PC-3 (cell line): ENCODE measurements at regions of chr1 and their contacts with region 1.

Region 1: DNA sequence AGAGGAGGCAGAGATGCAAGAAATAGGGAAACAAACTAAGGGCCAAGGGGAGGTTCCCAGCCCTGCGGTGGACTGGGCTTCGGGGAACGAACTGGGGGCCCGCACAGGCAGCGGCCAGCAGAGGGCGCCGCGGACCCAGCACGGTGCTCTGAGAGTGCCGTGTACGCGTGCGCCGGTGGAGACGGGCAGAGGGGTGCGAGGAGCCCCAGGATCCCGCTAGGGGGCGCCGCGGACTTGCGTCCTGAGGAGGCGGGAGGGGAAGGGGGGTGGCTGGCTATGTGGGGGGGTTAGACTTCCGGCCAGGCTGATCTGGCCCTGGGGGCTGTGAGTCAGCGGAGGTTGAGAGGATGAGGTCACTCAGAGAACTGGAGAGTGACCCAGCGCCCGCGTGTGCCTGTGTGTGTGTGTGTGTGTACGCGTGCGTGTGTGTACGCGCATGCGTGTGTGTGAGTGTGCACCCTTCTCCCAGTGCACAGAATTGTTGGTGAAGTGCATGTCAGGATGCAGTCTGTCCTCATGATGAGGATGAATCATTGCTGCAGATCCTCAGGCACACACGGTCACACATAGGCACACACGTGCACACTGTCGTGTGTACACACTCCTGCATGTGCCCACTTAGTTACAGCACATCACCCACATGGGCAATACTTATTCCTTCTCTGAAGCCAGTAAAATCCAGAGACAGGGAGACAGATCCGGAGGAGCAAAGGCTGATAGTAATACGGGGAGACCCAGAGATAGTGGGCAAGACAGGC is 17.0 kb downstream of the NES start:
- DNase-seq: peak; percentile 99
- ATAC-seq: peak; percentile 70
- H3K4me3 ChIP-seq: peak overlapping the region; percentile 64
- H3K27ac ChIP-seq: peak overlapping the region; percentile 66
- H3K4me1 ChIP-seq: peaks cover 52% of the 10 kb centered on the region
- H3K27me3 ChIP-seq: 0 out of 2 replicates have a peak, but pooled peaks cover 3% of the 10 kb centered on the region
- CTCF ChIP-seq: peak; percentile 100

Region 2: DNA sequence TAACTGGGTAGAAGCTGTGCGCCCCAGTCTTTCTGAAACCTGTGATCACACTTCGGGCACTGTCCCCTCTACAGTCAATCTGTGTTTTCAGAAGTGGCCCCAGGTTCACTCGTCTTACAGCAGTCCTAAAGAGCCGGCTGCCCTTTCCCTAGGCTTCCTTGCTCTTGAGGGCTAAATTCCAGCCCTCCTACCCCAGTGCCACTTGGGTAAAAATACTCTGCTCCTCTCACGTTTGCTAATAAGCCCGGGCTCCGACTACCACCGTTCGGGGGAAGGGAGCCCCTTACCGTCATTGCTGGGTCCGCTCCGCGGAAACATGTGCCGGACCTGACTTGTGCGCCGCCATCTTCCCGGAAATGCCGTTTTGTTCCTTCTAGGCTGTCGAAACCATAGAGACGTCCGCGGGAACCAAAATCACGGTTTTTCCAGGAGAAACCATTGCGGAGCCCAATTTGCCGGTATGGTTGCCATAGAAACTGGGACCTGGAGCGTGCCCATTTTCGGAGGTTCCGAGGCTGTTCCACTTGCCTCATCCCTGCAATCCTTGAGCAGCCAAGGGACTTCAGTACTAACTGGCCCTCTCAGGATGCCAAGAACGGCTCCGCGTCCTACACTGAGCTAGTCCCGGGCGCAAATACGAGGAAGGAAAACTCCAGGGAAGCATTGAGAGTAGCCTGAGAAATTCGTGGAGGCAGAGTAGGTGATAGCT is 58.9 kb before region 1 on chr1 and contains the start of gene GPATCH4:
- CTCF ChIA-PET with region 1: no interaction called
- POLR2A ChIA-PET with region 1: interaction called, 19 read pairs
- intact Hi-C with region 1: no loop called
- DNase-seq: peak; percentile 90
- ATAC-seq: peak; percentile 83
- H3K4me3 ChIP-seq: peak within 1 kb of the TSS; percentile 94
- H3K27ac ChIP-seq: peak within 1 kb of the TSS; percentile 53
- H3K4me1 ChIP-seq: peaks cover 20% of the 10 kb centered on the region
- H3K27me3 ChIP-seq: no peaks in the 10 kb centered on the region
- CTCF ChIP-seq: no peak
- total RNA-seq, gene GPATCH4: 37.3 and 73.7 TPM in 2 replicates

Region 3: DNA sequence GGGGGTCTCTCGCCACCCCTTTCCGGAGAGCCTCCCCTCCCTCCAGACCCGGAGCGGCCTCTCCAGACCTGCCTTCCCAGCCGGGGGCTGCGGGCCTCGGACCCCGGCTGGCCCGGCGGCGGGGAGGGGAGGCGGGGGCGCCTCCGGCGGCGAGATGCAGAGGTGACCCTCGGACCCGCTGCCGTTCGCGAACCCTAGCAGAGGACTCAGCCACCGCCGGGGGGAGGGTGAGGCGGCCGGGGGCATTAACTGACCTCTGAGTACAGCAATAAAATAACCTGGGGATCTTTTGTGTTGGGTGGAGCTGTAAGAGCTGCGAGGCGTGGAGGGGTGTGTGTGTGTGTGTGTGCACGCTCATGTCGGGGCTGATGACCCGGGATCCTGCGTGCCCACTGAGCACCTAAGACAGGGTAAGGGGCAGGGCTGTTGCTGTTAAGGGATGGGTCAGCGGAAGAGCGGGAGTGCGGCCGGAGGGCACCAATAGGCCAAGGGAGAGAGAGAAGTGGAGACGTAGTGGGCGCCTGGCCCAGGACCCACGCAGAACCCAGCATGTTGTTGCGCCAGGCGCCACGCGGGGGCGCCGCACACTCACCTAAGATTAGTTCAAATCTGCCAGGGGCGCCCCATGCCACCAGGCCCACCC is 34.6 kb before region 1 on chr1:
- CTCF ChIA-PET with region 1: interaction called, 6 read pairs
- POLR2A ChIA-PET with region 1: no interaction called
- intact Hi-C with region 1: loop called (anchors 1 kb)
- DNase-seq: peak; percentile 68
- ATAC-seq: peak; percentile 60
- H3K4me3 ChIP-seq: peak overlapping the region; percentile 36; the same call in 1 of the 2 replicates
- H3K27ac ChIP-seq: no peak overlapping the region
- H3K4me1 ChIP-seq: 0 out of 2 replicates have a peak, but pooled peaks cover 6% of the 10 kb centered on the region
- H3K27me3 ChIP-seq: peaks cover 26% of the 10 kb centered on the region
- CTCF ChIP-seq: peak; percentile 94

Region 4: DNA sequence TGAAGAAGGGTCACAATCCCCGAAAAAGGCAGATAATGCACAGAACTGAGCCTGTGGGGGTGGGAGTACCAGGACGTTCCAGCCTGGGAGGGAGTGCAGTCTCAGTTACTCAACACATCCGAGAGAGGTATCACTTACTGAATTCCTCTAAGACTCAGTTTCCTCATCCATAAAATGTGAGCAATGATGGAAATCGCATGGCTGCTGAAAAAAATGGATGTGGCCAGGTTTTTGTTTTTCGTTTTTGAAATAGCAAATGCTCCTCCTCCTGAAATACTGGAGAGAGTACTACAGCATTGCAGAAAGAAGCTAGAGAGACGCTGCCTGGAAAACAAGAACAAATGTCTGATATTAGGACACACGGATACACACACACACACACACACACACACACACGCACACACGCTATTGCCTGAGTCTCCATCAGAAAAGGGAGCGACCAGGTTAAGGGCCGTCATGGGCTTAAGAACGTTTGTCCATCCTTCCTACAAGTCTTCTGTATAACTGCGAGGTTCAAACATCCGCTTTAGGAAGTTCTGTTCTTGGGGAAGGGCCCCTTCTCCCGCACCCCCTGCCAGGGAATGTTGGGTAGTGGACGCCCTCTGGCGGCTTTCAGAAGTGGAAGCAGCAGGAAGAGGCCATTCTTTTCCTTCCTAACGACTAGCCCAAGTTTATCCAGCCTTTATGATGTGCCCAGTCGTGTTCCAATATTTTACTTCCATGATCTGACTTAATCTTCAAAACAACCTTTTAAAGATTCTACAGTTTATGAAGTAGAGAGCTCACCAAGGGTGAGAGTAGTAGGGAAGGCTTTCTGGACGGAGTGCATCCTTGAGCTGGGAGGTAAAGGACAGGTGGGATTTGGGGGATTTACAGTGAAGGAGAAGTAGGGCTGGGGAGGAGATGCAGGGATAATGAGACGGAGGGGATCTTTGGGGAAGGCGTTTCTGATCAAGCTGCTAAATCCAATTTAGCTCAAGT is 17.7 kb after region 1 on chr1:
- CTCF ChIA-PET with region 1: interaction called, 37 read pairs
- POLR2A ChIA-PET with region 1: interaction called, 8 read pairs
- intact Hi-C with region 1: loop called (anchors 1 kb)
- DNase-seq: peak; percentile 75
- ATAC-seq: peak; percentile 53
- H3K4me3 ChIP-seq: peak overlapping the region; percentile 64
- H3K27ac ChIP-seq: no peak overlapping the region
- H3K4me1 ChIP-seq: peaks cover 28% of the 10 kb centered on the region
- H3K27me3 ChIP-seq: no peaks in the 10 kb centered on the region
- CTCF ChIP-seq: peak; percentile 99